ENCODE measurements at regions of chr1 and their contacts with region 1.

Region 1: DNA sequence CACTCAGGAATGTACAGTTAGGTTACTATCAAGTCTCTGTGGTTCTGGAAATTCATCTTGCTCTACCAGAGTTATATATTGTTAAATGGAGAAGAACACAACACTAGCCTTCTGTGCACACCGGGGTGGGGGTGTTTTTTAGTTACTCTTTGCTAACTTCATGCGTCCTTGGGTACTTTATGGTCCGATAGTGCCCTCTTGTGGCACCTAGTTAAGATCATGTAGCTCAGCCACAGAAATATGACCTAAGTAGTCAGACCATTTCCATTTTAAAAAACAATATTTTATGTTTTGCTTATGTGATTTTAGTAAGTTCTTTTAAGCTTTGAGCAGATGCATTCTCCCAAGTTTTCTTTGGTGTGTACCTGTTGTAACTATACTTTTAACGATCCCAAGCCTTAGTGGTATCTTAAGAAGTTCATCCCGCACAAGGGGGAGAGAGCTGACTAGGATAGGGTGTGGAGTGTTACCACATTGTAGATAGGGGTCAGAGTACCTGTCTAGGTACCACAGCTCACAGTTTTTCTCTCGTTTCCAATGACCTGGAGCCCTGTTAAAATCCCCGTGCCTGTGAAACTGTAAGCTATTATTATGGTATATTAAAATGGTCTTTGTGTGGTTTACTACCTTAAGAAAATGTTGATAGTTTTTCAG is 20.6 kb upstream of the SH3D21 start:
- DNase-seq: peak; percentile 71
- ATAC-seq: peak; percentile 91

Region 2: GRCh38 chr1:36149237-36149972 is 136.2 kb before region 1 on chr1 and contains the start of gene TRAPPC3:
- intact Hi-C with region 1: loop called (anchors 5 kb)
- DNase-seq: peak; percentile 100
- ATAC-seq: peak; percentile 95
- total RNA-seq, gene TRAPPC3: 46.8 TPM

Region 3: GRCh38 chr1:37362594-37363385 is 1077.2 kb after region 1 on chr1:
- intact Hi-C with region 1: loop called (anchors 5 kb)
- DNase-seq: no peak
- ATAC-seq: peak; percentile 77